Naive thymus-derived CD4-positive, alpha-beta T cell (primary cell): ENCODE measurements at regions of chr6 and their contacts with region 1.

Region 1: GRCh38 chr6:2448820-2449571 is 203.6 kb upstream of the GMDS start:
- DNase-seq: no peak
- ATAC-seq: peak; percentile 61
- H3K4me3 ChIP-seq: no peak overlapping the region
- H3K4me3 Mint-ChIP-seq: peak overlapping the region in 6 of 10 donors; percentile 14 to 59 (median 54)
- H3K27ac ChIP-seq: no peak overlapping the region
- H3K27ac Mint-ChIP-seq: no peak overlapping the region
- H3K4me1 ChIP-seq: no peaks in the 10 kb centered on the region
- H3K4me1 Mint-ChIP-seq: peaks cover 0 to 6% (median 2%) of the 10 kb centered on the region in 7 donors
- H3K27me3 ChIP-seq: no peaks in the 10 kb centered on the region
- H3K27me3 Mint-ChIP-seq: peaks cover 0 to 11% (median 7%) of the 10 kb centered on the region in 5 donors

Region 2: DNA sequence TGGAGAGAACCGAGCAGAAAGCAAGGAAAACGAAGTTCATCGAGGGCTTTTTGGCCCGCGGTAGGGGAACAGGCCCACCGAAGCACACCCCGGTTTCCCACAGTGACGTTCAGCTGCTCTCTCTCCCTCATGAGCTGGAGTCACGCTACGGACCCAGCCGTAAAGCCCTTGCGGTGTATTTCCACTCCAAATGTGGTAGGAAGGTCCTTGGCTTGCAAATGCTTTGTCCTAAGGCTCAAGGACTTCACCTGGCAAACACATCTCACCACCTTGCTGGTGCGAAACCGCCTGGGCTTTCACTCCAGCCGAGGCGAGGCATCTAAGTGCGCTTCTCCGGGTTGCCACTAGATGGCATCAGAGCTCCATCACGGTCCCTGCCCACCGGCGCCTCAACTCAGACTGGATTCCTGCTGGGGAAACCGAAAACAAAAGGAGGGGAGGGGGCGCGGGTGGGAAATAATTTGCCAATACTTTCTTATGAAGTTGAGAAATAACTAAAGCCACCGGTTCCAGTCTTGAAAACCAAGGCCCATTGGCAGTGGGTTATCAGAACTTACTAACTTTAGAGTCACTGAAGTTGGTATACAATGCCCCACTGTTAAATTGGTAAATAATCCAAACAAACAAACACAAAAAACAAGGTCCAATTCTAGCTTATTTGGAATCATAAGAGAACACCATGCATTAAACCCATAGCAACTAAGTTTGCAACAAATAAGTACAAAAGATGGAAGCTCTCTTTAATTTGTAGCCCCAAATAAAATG is 852.7 kb before region 1 on chr6:
- CTCF ChIA-PET with region 1: interaction called, 4 read pairs
- POLR2A ChIA-PET with region 1: no interaction called
- intact Hi-C with region 1: loop called (anchors 1 to 2 kb)
- DNase-seq: peak in 8 of 9 donors; percentile 45 to 76 (median 63)
- ATAC-seq: peak; percentile 90
- H3K4me3 ChIP-seq: no peak overlapping the region
- H3K4me3 Mint-ChIP-seq: peak overlapping the region in 6 of 10 donors; percentile 7 to 42 (median 30)
- H3K27ac ChIP-seq: no peak overlapping the region
- H3K27ac Mint-ChIP-seq: peak overlapping the region in 1 of 9 donors; percentile 28
- H3K4me1 ChIP-seq: peaks cover 0 to 4% of the 10 kb centered on the region in 2 donors
- H3K4me1 Mint-ChIP-seq: peaks cover 4 to 9% (median 7%) of the 10 kb centered on the region in 7 donors
- H3K27me3 ChIP-seq: peaks cover 0 to 4% of the 10 kb centered on the region in 2 donors
- H3K27me3 Mint-ChIP-seq: peaks cover 59 to 68% (median 60%) of the 10 kb centered on the region in 5 donors

Region 3: DNA sequence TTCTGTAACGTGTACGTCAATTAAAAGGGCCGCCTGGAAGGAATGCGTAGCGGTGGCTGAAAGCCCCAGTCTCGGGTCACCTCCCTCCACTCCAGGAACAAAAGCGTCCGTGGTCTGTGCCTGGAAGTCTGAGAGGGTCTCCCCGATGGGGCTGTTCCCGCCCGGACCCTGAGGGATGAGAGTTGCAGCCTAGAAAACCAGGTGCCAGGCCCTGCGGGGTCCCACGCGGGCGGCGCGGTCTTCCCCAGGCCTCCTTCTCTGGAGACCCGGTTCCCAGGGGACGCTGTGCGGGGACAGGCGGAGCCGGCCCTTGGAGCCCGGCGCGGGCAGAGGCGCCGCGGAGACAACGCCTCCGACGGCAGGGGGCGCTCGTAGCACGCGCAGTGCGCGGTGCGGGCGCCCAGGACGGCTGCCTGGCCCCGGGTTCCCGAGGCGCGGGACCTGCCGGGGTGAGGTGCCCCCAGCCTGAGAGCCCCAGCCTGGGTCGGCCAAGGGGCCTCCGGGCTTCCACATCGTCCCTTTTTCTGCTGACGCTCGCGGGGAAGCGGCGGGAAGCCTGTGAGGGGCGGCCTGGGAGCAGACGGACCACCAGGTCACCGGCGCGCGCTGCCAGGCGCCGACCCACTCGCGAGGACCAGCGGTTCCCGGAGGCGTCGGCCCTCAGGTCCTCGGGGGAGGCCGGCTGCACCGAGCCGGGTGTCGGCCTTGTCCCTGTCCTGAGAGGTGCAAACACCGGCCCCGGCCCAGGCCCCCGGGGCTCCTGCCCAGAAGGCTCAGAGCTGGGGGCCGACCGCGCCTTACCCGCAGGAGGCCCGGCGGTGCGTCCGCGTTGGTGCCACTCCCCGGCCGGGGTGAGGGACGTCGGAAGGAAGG is 844.6 kb before region 1 on chr6:
- CTCF ChIA-PET with region 1: no interaction called
- POLR2A ChIA-PET with region 1: no interaction called
- intact Hi-C with region 1: loop called in 1 of 2 experiments (anchors 1 kb)
- DNase-seq: peak in 8 of 9 donors; percentile 40 to 81 (median 71)
- ATAC-seq: peak; percentile 86
- H3K4me3 ChIP-seq: no peak overlapping the region
- H3K4me3 Mint-ChIP-seq: peak overlapping the region in 5 of 10 donors; percentile 25 to 74 (median 50)
- H3K27ac ChIP-seq: no peak overlapping the region
- H3K27ac Mint-ChIP-seq: no peak overlapping the region
- H3K4me1 ChIP-seq: peaks cover 15 to 35% of the 10 kb centered on the region in 2 donors
- H3K4me1 Mint-ChIP-seq: peaks cover 22 to 41% (median 36%) of the 10 kb centered on the region in 7 donors
- H3K27me3 ChIP-seq: peaks cover 8 to 26% of the 10 kb centered on the region in 2 donors
- H3K27me3 Mint-ChIP-seq: peaks cover 77 to 84% (median 80%) of the 10 kb centered on the region in 5 donors